Left cardiac atrium (tissue), 4 donors: ENCODE measurements at regions of chr11 and their contacts with region 1.

Region 1: DNA sequence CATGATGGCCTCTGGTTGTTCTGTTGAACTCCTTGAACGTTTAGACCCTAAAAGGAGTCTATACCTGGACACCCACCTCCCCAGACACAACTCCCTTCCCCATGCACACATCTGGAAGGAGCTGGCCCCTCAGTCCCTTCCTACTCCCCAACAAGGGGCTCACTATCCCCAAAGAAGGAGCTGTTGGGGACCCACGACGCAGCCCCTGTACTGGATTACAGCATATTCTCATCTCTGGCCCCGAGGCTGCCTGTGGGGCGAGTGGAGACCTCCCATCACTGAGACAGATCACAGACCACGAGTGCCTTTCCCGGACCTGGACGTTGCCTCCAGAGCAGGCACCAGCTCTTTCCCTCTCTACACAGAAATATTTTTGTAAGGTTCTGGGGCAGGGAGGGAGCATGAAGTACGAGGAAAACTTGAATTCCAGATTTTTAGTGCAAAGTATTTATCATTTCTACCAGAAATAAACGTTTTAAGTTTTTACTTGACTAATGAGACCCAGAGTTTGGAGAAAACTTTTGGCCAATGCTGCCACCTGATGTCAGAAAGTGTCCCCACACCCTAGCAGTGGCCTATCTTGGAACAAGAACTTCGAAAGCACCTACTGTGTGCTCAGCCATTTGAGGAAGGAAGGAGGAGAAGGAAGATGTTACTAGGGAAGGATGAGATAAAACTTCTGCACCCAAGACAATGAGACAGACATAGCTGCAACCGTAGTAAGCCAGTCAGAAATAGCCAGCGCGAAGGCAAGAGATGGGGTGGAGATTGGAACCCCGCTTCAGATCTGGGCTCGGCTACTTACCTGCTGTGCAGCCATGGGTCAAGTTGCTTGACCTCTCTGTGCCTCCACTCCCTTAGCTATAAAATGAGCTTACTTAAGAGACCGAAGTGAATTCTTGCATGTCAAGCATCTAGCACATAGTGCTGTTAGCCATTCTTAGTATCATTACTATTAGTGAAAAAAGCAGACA is 10.2 kb upstream of the POU2F3 start:
- DNase-seq: no peak
- ATAC-seq: no peak

Region 2: GRCh38 chr11:120172054-120172911 is 57.5 kb before region 1 on chr11:
- intact Hi-C with region 1: loop called (anchors 1 to 2 kb)
- DNase-seq: peak; percentile 80
- ATAC-seq: peak; percentile 52 to 56